Activated T-helper 1 cell treated with anti-CD3 and anti-CD28 coated beads, Interleukin-12 subunit alpha, Interleukin-12 subunit beta, Interleukin-2, Interleukin-4 antibody, amounts not matched to agents 30 ng/mL and 10 ng/mL and 1 ng/mL, durations not matched to agents 14 hours and 24 hours and 36 hours (primary cell): ENCODE measurements at regions of chr13 and their contacts with region 1.

Region 1: DNA sequence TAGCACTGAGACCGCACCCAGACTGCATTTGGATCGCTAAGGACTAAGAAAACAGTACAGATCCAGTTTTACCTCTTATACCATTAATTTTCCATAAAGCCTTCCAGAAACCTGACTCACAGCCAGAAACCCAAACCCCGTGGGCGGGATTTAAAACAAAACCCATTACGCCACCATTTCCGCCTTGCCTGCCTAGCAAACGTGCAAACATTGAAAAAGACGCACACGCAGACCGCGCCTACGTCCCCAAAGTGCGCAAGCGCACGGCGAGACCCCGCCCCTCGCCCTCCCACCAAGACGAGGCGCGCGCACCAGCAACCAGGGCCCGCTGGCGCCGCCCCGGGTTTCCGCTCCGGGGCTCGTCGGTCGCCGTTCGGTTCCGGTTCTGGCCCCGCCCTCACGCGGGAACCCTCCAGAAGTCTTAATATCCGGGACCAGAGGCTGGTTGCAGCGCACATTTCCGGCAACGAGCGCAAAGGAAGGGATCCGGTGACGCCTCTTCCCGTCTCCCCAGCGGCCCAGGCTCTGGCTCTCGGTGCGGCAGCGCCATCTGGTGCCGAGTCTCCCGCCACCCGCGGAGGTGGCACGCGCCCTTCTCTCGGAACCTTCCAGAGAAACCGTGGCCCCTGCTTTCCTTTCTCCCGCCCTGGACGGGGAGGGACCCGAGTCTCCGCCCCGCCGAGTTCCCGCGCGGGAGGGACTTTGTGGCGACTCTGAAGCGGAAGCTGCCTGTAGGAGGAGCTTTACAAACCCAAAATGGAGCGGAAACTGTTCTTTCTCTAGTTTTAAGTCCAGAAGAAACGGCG is 256.9 kb upstream of the STARD13 start:
- DNase-seq: peak; percentile 99
- H3K4me3 Mint-ChIP-seq: peak overlapping the region; percentile 90
- H3K27ac Mint-ChIP-seq: peak overlapping the region; percentile 100
- H3K4me1 Mint-ChIP-seq: peaks cover 53% of the 10 kb centered on the region
- H3K27me3 Mint-ChIP-seq: no peaks in the 10 kb centered on the region

Region 2: DNA sequence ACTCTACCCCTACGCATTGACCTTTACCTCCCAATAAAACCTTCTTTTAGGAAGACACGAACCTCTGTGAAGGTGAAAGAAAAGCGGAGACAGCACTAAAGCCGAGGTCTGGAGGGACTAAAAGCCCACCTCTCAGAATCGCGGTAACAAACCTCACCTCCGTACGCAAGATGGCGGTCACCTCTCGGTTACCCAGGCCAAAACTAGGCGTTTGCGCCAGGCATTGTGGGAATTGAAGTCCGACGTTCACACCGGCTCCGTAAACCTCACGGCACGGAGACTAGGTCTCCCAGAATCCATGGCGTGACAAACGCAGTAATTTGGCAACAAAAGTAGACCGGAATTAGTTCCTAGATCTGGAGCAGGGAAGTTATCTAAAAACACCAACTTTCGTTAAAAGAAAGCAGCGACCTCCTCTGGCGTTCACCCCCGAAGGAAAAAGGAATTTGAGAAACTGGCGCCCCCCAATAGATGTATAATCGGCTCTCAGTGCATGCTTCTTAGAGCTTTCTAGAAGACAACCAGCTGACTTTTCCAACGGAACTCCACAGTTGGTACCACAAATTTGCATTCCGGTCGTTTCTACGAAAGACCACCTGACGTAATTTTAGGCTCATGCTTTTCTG is 1003.8 kb before region 1 on chr13 and contains the start of gene N4BP2L2:
- intact Hi-C with region 1: loop called (anchors 1 kb)
- DNase-seq: peak; percentile 88
- H3K4me3 Mint-ChIP-seq: peak within 1 kb of the TSS; percentile 96
- H3K27ac Mint-ChIP-seq: peak within 1 kb of the TSS; percentile 99
- H3K4me1 Mint-ChIP-seq: peaks cover 46% of the 10 kb centered on the region
- H3K27me3 Mint-ChIP-seq: peaks cover 8% of the 10 kb centered on the region
- total RNA-seq, gene N4BP2L2: 87.1 and 92.8 TPM in 2 replicates

Region 3: DNA sequence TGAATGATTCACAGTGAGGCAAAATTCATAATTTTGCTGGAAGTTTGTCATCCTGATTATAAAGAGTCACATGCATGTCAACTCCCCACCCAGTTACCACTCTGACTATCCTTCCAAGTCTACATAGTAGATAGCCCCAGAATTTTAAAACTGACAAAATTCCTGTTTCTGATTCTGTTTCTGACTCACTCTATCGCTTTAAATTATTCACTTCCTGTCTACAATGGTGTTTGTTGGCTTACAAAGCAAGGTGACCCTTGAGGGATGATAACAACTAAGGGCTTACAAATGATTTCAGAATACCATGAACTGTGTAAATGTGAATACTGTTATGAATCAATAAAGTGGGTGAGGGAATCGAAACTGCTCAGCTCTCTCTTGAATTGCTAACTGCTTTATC is 625.0 kb before region 1 on chr13:
- intact Hi-C with region 1: loop called (anchors 1 kb)
- DNase-seq: no peak
- H3K4me3 Mint-ChIP-seq: no peak overlapping the region
- H3K27ac Mint-ChIP-seq: peak overlapping the region; percentile 5
- H3K4me1 Mint-ChIP-seq: peaks cover 18% of the 10 kb centered on the region
- H3K27me3 Mint-ChIP-seq: no peaks in the 10 kb centered on the region

Region 4: DNA sequence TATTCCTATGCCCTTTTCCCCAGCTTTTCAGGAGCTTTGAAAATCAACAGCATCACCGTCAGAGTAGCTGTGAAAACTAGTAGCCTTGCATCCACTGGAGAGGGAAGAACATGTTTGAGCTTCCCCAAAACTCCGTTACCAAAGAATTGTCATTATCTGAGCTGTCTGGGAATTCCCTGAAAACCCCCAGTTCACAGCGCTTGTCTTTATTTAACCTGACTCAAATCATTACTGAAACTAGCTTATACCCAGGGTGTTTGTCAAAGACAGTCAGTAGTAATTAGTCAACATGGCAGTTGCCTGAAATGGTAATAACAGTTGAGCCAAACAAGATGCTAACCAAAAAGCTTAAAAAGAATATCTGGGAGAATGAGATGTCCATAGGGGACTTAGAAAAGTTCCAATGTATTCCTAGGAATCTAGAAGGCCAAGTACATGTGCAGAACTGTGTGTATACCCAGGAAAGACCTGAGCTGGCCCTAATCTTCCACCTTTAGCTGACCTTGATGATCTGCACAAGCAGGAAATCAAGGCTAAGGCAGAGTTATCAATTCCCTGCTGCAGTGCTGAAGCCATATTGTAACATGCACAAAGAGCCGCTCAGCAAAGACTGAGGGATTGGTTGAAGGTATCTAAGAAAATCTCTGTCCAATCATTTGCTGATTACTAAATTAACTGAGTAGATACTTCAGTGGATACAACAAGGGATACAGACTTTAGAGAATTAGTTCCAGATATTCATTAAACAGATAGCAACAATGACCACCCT is 395.5 kb before region 1 on chr13:
- intact Hi-C with region 1: loop called (anchors 1 kb)
- DNase-seq: peak; percentile 25
- H3K4me3 Mint-ChIP-seq: peak overlapping the region; percentile 20
- H3K27ac Mint-ChIP-seq: peak overlapping the region; percentile 81
- H3K4me1 Mint-ChIP-seq: peaks cover 41% of the 10 kb centered on the region
- H3K27me3 Mint-ChIP-seq: no peaks in the 10 kb centered on the region

Region 5: GRCh38 chr13:33639626-33640080 is 97.2 kb after region 1 on chr13:
- intact Hi-C with region 1: loop called (anchors 1 kb)
- DNase-seq: no peak
- H3K4me3 Mint-ChIP-seq: no peak overlapping the region
- H3K27ac Mint-ChIP-seq: peak overlapping the region; percentile 75
- H3K4me1 Mint-ChIP-seq: peaks cover 45% of the 10 kb centered on the region
- H3K27me3 Mint-ChIP-seq: peaks cover 2% of the 10 kb centered on the region

Region 6: GRCh38 chr13:35157143-35157755 is 1614.8 kb after region 1 on chr13:
- intact Hi-C with region 1: loop called (anchors 5 kb)
- DNase-seq: no peak
- H3K4me3 Mint-ChIP-seq: no peak overlapping the region
- H3K27ac Mint-ChIP-seq: no peak overlapping the region
- H3K4me1 Mint-ChIP-seq: peaks cover 12% of the 10 kb centered on the region
- H3K27me3 Mint-ChIP-seq: no peaks in the 10 kb centered on the region